Activated CD8-positive, alpha-beta T cell treated with anti-CD3 and anti-CD28 coated beads for 36 hours (primary cell): ENCODE measurements at regions of chr1 and their contacts with region 1.

Region 1: GRCh38 chr1:161440312-161440894 is 64.9 kb upstream of the FCGR2A start:
- DNase-seq: peak; percentile 78
- ATAC-seq: peak; percentile 67
- H3K4me3 Mint-ChIP-seq: peak overlapping the region; percentile 84
- H3K27ac Mint-ChIP-seq: peak overlapping the region; percentile 91
- H3K4me1 Mint-ChIP-seq: peaks cover 9% of the 10 kb centered on the region
- H3K27me3 Mint-ChIP-seq: peaks cover 32% of the 10 kb centered on the region
- CTCF ChIP-seq: peak; percentile 62

Region 2: GRCh38 chr1:161374373-161374772 is 66.0 kb before region 1 on chr1:
- CTCF ChIA-PET with region 1: no interaction called
- POLR2A ChIA-PET with region 1: no interaction called
- intact Hi-C with region 1: no loop called
- DNase-seq: no peak
- ATAC-seq: no peak
- H3K4me3 Mint-ChIP-seq: no peak overlapping the region
- H3K27ac Mint-ChIP-seq: no peak overlapping the region
- H3K4me1 Mint-ChIP-seq: no peaks in the 10 kb centered on the region
- H3K27me3 Mint-ChIP-seq: no peaks in the 10 kb centered on the region
- CTCF ChIP-seq: no peak

Region 3: DNA sequence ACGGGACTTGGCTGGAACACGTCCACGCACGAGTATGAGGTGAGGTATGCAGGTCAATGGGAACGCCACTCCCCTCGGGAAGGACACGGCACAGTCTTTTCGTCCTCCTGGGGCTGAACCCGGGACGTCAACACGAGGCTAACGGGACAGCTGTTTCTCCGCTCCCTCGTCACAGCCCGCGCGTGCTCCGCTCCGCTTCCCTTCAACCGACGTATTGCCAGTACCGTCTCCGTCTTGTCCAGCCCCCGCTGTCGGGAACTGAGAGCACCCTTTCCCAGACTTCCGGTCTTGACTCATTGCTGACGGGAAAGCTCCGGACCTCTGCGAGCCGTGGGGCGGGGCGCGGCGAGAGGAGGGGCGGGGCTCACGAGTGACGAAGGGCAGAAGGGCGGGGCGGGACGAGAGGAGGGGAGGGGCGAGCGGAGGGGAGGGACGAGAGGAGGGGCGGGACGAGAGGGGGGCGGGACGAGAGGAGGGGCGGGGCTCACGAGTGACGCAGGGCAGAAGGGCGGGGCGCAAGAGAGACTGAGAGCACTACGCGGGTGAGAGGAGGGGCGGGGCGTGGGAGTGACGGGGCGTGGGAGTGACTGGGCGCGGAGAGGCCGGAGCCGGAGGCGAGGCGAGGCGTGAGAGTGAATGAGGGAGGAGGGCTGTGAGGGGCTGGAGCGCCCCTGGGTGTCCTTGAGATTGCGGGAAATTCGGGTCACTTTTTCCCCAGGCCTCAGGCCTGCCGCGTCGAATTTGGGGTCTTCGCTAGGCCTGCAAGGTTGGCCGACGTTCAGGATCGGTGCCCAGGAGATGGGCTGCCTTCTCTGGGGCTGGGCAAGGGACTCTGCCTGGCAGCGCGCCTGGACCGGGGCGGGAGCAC is 50.5 kb before region 1 on chr1:
- CTCF ChIA-PET with region 1: interaction called, 10 read pairs
- POLR2A ChIA-PET with region 1: no interaction called
- intact Hi-C with region 1: no loop called
- DNase-seq: peak; percentile 94
- ATAC-seq: peak; percentile 88
- H3K4me3 Mint-ChIP-seq: peak overlapping the region; percentile 84
- H3K27ac Mint-ChIP-seq: peak overlapping the region; percentile 95
- H3K4me1 Mint-ChIP-seq: peaks cover 40% of the 10 kb centered on the region
- H3K27me3 Mint-ChIP-seq: no peaks in the 10 kb centered on the region
- CTCF ChIP-seq: no peak

Region 4: DNA sequence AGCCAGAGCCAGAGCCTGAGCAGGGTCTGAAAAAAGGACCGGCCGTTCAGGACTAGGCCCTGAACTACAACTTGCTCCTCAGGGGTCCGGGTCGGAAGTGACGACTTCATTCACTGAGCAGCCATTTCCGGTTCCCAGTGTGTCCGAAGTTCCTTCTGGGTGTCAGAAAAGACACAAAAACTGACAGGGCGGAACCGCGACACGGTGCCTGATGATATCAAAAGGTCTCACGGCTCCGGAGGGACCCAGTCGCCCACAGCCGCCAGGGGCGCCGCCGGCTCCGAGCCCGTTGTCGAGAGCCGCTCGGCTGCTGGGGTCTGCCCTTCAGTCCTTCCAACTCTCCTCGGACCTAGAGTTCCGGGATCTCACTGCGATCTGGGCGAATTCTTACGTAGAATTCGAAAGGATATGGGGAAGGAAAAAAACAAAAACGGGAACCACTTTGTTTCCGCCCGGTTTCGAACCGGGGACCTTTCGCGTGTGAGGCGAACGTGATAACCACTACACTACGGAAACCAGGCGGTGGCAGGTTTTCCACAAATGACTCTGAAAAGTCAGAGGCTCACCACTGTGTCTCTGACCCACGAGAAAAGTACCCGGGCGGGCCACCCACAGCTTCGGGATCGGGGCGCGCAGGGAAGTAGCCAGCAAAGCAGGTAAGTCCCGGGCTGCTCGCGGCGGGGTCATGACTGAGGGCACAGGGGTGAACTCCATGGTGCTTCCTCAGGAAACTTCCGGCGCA is 41.0 kb before region 1 on chr1:
- CTCF ChIA-PET with region 1: interaction called, 10 read pairs
- POLR2A ChIA-PET with region 1: interaction called, 11 read pairs
- intact Hi-C with region 1: no loop called
- DNase-seq: peak; percentile 94
- ATAC-seq: peak; percentile 84
- H3K4me3 Mint-ChIP-seq: peak overlapping the region; percentile 94
- H3K27ac Mint-ChIP-seq: peak overlapping the region; percentile 99
- H3K4me1 Mint-ChIP-seq: peaks cover 26% of the 10 kb centered on the region
- H3K27me3 Mint-ChIP-seq: peaks cover 3% of the 10 kb centered on the region
- CTCF ChIP-seq: peak; percentile 78

Region 5: GRCh38 chr1:161408429-161409052 is 31.9 kb before region 1 on chr1:
- CTCF ChIA-PET with region 1: interaction called, 25 read pairs
- POLR2A ChIA-PET with region 1: interaction called, 8 read pairs
- intact Hi-C with region 1: no loop called
- DNase-seq: no peak
- ATAC-seq: no peak
- H3K4me3 Mint-ChIP-seq: no peak overlapping the region
- H3K27ac Mint-ChIP-seq: no peak overlapping the region
- H3K4me1 Mint-ChIP-seq: peaks cover 32% of the 10 kb centered on the region
- H3K27me3 Mint-ChIP-seq: peaks cover 3% of the 10 kb centered on the region
- CTCF ChIP-seq: no peak

Region 6: GRCh38 chr1:161427733-161428516 is 12.5 kb before region 1 on chr1:
- CTCF ChIA-PET with region 1: interaction called, 28 read pairs
- POLR2A ChIA-PET with region 1: no interaction called
- intact Hi-C with region 1: no loop called
- DNase-seq: peak; percentile 56
- ATAC-seq: peak; percentile 69
- H3K4me3 Mint-ChIP-seq: peak overlapping the region; percentile 60
- H3K27ac Mint-ChIP-seq: no peak overlapping the region
- H3K4me1 Mint-ChIP-seq: peaks cover 8% of the 10 kb centered on the region
- H3K27me3 Mint-ChIP-seq: peaks cover 30% of the 10 kb centered on the region
- CTCF ChIP-seq: no peak

Region 7: DNA sequence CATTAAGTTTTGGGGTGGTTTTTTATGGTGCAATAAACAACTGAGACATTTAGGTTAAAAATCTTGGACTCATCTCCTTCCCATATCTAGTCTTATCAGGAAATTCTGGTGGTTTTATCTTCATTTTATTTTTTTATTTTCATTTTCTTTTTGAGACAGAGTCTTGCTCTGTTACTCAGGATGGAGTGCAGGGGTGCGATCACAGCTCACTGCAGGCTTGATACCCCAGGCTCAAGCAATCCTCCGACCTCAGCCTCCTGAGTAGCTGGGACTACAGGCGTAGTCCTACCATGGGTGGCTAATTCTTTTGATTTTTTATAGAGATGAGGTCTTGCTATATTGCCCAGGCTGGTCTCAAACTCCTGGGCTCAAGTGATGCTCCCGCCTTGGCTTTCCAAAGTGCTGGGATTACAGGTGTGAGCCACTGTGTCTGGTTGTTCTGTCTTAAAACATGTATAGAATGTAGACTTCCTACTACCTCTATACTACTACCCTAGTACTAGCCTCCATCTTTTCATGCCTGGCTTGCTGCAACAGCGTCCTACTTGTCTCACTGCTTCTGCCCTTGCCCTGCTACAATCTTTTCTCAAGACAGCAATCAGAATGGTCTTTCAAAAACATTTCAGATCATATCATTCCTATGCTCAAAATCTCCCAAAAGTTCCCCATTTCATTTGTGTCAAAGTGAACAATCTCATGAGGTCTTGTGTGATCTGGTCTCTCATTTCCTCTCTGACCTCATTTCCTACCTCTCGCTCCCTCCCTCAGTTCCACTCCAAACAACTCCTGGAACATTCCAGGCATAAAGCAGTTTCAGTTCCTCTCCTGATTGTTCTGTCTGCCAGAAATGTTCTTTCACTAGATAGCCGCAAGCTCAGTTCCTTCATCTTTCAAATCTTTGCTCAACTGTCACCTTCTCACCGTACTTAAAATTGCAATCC is 59.0 kb after region 1 on chr1:
- CTCF ChIA-PET with region 1: no interaction called
- POLR2A ChIA-PET with region 1: no interaction called
- intact Hi-C with region 1: no loop called
- DNase-seq: no peak
- ATAC-seq: no peak
- H3K4me3 Mint-ChIP-seq: no peak overlapping the region
- H3K27ac Mint-ChIP-seq: no peak overlapping the region
- H3K4me1 Mint-ChIP-seq: peaks cover 7% of the 10 kb centered on the region
- H3K27me3 Mint-ChIP-seq: peaks cover 22% of the 10 kb centered on the region
- CTCF ChIP-seq: no peak